ENCODE measurements at regions of chr7 and their contacts with region 1.

Region 1: GRCh38 chr7:17298207-17298839 is at the start of gene AHR:
- DNase-seq: peak; percentile 89
- ATAC-seq: peak; percentile 72
- H3K4me3 ChIP-seq: peak within 1 kb of the TSS; percentile 94
- H3K27ac ChIP-seq: peak within 1 kb of the TSS; percentile 75
- H3K4me1 ChIP-seq: peaks cover 17% of the 10 kb centered on the region
- H3K27me3 ChIP-seq: no peaks in the 10 kb centered on the region
- CTCF ChIP-seq: no peak
- total RNA-seq, gene AHR: 62.5 and 72.7 TPM in 2 replicates

Region 2: GRCh38 chr7:16891338-16891737 is 407.0 kb before region 1 on chr7:
- CTCF ChIA-PET with region 1: interaction called, 7 read pairs
- POLR2A ChIA-PET with region 1: no interaction called
- intact Hi-C with region 1: loop called (anchors 1 kb)
- DNase-seq: peak; percentile 85
- ATAC-seq: peak; percentile 87
- H3K4me3 ChIP-seq: no peak overlapping the region
- H3K27ac ChIP-seq: peak overlapping the region; percentile 45
- H3K4me1 ChIP-seq: peaks cover 37% of the 10 kb centered on the region
- H3K27me3 ChIP-seq: no peaks in the 10 kb centered on the region
- CTCF ChIP-seq: peak; percentile 88

Region 3: GRCh38 chr7:17041324-17041723 is 257.0 kb before region 1 on chr7:
- CTCF ChIA-PET with region 1: no interaction called
- POLR2A ChIA-PET with region 1: interaction called, 3 read pairs
- intact Hi-C with region 1: loop called (anchors 1 kb)
- DNase-seq: peak; percentile 87
- ATAC-seq: peak; percentile 71
- H3K4me3 ChIP-seq: peak overlapping the region; percentile 9; the same call in 1 of the 2 replicates
- H3K27ac ChIP-seq: peak overlapping the region; percentile 80
- H3K4me1 ChIP-seq: peaks cover 53% of the 10 kb centered on the region
- H3K27me3 ChIP-seq: no peaks in the 10 kb centered on the region
- CTCF ChIP-seq: no peak

Region 4: DNA sequence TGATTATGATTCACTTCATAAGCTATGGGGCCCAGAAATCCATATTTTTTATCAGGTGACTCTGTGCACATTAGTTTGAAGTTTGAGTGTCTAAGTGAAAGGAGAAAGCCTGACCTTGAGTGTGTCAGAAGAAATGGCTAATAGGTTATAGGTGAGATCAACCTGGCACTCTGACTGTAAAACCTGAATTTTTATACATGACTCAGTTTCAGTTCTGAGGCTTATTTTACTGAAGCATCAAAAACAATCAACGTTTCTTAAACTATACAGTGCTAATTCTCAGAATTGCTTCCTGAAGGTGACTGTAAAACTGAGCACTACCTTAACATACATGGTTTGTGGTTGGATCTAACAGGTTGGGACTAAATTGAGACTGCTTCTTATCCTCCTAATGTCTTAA is 159.2 kb before region 1 on chr7:
- CTCF ChIA-PET with region 1: interaction called, 3 read pairs
- POLR2A ChIA-PET with region 1: interaction called, 19 read pairs
- intact Hi-C with region 1: loop called (anchors 2 kb)
- DNase-seq: peak; percentile 56
- ATAC-seq: peak; percentile 20
- H3K4me3 ChIP-seq: peak overlapping the region; percentile 7; the same call in 1 of the 2 replicates
- H3K27ac ChIP-seq: peak overlapping the region; percentile 95
- H3K4me1 ChIP-seq: peaks cover 56% of the 10 kb centered on the region
- H3K27me3 ChIP-seq: no peaks in the 10 kb centered on the region
- CTCF ChIP-seq: no peak

Region 5: DNA sequence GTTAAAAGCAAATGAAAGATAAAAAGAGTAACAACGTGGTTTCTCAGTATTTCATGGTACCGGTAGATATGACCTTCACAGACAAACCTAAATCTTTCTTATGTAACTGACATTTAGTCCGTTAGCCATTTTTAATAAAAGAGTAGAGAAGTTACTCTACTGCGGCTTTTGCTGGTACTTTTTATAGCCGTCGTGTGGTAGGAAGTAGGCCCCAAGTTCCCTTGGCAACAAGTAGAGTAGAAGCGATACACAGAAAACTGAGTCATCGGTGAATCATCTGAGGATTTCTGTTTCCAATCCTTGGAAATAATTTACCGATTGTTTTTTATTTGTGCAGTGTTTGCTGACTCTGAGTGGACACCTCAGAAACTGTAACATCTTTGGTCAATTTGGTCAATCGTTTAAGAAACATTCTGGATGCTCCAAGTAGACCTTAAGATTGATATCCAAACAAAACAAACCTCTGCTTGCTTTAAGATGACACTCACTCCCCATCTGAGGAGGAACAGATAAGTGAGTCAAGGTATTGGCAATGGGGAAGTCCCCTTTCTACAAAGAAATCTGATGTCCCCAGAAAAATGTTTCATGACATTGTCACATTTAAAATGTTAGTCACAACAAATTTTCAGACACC is 63.8 kb before region 1 on chr7:
- CTCF ChIA-PET with region 1: no interaction called
- POLR2A ChIA-PET with region 1: no interaction called
- intact Hi-C with region 1: loop called (anchors 1 kb)
- DNase-seq: peak; percentile 98
- ATAC-seq: peak; percentile 91
- H3K4me3 ChIP-seq: peak overlapping the region; percentile 52
- H3K27ac ChIP-seq: peak overlapping the region; percentile 93
- H3K4me1 ChIP-seq: peaks cover 32% of the 10 kb centered on the region
- H3K27me3 ChIP-seq: no peaks in the 10 kb centered on the region
- CTCF ChIP-seq: 0 out of 2 replicates have a peak, but pooled peaks have one; percentile 9